ENCODE measurements at regions of chr3 and their contacts with region 1.

Region 1: GRCh38 chr3:99023590-99024192 is 122.2 kb upstream of the DCBLD2 start:
- DNase-seq: no peak
- ATAC-seq: no peak
- H3K4me3 ChIP-seq: no peak overlapping the region
- H3K27ac ChIP-seq: no peak overlapping the region
- H3K4me1 ChIP-seq: no peaks in the 10 kb centered on the region
- H3K27me3 ChIP-seq: no peaks in the 10 kb centered on the region

Region 2: GRCh38 chr3:99172736-99173657 is 149.3 kb after region 1 on chr3:
- intact Hi-C with region 1: loop called (anchors 2 to 5 kb)
- DNase-seq: peak; percentile 62 to 67
- ATAC-seq: no peak
- H3K4me3 ChIP-seq: no peak overlapping the region
- H3K27ac ChIP-seq: no peak overlapping the region
- H3K4me1 ChIP-seq: no peaks in the 10 kb centered on the region
- H3K27me3 ChIP-seq: no peaks in the 10 kb centered on the region

Region 3: GRCh38 chr3:99250272-99250671 is 226.6 kb after region 1 on chr3:
- intact Hi-C with region 1: loop called in 1 of 2 experiments (anchors 5 kb)
- DNase-seq: no peak
- ATAC-seq: no peak
- H3K4me3 ChIP-seq: no peak overlapping the region
- H3K27ac ChIP-seq: peak overlapping the region in 1 of 2 donors; percentile 82
- H3K4me1 ChIP-seq: peaks cover 5 to 21% of the 10 kb centered on the region in 2 donors
- H3K27me3 ChIP-seq: no peaks in the 10 kb centered on the region

Region 4: DNA sequence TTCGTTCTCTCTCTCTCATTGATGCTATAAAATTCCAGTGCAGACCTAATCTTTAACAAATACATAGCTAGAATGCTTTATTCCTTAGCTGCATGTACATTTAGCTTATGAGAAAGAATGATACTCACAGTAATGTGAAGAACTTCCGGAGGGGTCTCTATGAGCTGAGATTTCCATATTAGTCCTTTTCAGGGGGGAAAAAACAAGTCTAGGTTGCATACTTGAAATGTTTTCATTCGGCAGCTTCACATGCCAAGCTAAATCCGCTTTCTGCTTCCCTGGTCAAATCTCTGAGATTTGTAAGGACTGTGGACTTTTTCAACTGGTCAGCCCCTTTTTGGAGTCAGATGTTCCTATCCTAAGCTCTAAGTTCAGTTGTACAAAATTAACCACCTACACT is 503.2 kb after region 1 on chr3:
- intact Hi-C with region 1: loop called (anchors 10 kb)
- DNase-seq: no peak
- ATAC-seq: no peak
- H3K4me3 ChIP-seq: peak overlapping the region; percentile 8 to 26
- H3K27ac ChIP-seq: peak overlapping the region; percentile 71 to 89
- H3K4me1 ChIP-seq: peaks cover 6% of the 10 kb centered on the region in 2 donors
- H3K27me3 ChIP-seq: no peaks in the 10 kb centered on the region

Region 5: GRCh38 chr3:99532246-99532645 is 508.6 kb after region 1 on chr3:
- intact Hi-C with region 1: loop called (anchors 10 kb)
- DNase-seq: peak in 1 of 2 donors; percentile 51
- ATAC-seq: peak; percentile 77
- H3K4me3 ChIP-seq: no peak overlapping the region
- H3K27ac ChIP-seq: no peak overlapping the region
- H3K4me1 ChIP-seq: peaks cover 0 to 5% of the 10 kb centered on the region in 2 donors
- H3K27me3 ChIP-seq: no peaks in the 10 kb centered on the region

Region 6: DNA sequence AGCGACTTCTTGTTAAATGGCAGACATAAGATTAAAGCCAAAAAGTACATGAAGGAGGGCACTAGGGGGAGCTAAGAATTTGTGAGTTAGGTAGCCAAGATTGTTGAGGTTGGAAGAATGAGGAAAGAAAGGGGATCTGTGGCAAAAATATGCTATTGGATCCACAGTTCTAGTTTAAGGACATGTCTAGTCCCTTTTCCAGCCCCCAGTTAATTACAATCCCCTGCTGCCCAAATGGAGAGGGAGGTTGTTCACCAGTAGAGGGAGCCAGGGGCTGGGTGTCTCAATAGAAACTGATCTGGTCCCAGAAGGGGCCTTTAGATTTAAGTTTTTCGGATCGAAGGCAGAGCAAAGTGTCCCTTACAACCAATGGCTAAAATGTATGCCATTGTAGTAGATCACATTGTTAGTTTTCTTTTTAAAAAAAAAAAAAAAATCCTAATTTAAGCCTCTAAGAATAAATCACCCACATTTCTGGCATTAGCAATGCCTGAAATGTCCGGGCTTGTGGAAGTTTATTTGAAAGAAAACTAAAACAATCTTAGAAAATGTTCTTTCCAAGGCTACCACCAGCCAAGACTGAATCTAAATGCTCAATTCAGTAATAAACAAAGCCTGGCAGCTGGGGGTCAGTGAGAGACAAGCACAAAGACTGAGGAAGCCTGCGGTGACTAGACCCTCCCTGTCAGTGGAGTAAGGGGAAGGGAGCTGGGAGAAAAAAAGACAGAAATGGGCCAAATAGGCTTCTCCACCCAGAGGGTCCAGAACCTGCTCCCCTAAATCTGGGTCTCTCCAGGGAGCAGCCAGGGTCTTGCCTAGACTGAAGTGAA is 621.8 kb after region 1 on chr3:
- intact Hi-C with region 1: loop called in 1 of 2 experiments (anchors 10 kb)
- DNase-seq: no peak
- ATAC-seq: peak; percentile 17
- H3K4me3 ChIP-seq: peak overlapping the region; percentile 40 to 54
- H3K27ac ChIP-seq: peak overlapping the region; percentile 63 to 90
- H3K4me1 ChIP-seq: peaks cover 2 to 13% of the 10 kb centered on the region in 2 donors
- H3K27me3 ChIP-seq: no peaks in the 10 kb centered on the region

Region 7: GRCh38 chr3:99753268-99753975 is 729.7 kb after region 1 on chr3:
- intact Hi-C with region 1: loop called in 1 of 2 experiments (anchors 5 kb)
- DNase-seq: no peak
- ATAC-seq: peak; percentile 75
- H3K4me3 ChIP-seq: no peak overlapping the region
- H3K27ac ChIP-seq: peak overlapping the region in 1 of 2 donors; percentile 67
- H3K4me1 ChIP-seq: peaks cover 1 to 9% of the 10 kb centered on the region in 2 donors
- H3K27me3 ChIP-seq: no peaks in the 10 kb centered on the region

Measured in aorta (tissue), 5 donors.